Testis (tissue), 5 donors: ENCODE measurements at regions of chr3 and their contacts with region 1.

Region 1: GRCh38 chr3:171772427-171773056 is 37.7 kb downstream of the PLD1 start:
- DNase-seq: peak; percentile 82
- H3K4me3 ChIP-seq: no peak overlapping the region
- H3K27ac ChIP-seq: no peak overlapping the region
- H3K4me1 ChIP-seq: peaks cover 11% of the 10 kb centered on the region
- H3K27me3 ChIP-seq: no peaks in the 10 kb centered on the region
- CTCF ChIP-seq: peak; percentile 52 to 68 (median 64)
- POLR2A ChIP-seq: no peak

Region 2: DNA sequence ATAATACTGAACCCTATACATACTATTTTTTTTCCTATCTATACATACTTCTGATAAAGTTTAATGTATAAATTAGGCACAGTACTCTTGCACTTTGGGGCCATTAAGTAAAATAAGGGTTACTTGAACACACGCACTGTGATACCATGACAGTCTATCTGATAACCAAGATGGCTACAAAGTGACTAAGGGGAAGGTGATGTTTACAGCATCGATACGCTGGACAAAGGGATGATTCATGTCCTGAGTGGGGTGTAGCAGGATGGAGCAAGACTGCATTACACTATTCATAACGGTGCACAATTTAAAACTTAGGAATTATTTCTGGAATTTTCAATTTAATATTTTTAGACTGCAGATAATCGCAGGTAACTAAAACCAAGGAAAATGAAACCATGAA is 716.0 kb before region 1 on chr3:
- intact Hi-C with region 1: no loop called
- DNase-seq: no peak
- H3K4me3 ChIP-seq: no peak overlapping the region
- H3K27ac ChIP-seq: no peak overlapping the region
- H3K4me1 ChIP-seq: no peaks in the 10 kb centered on the region
- H3K27me3 ChIP-seq: no peaks in the 10 kb centered on the region
- CTCF ChIP-seq: no peak
- POLR2A ChIP-seq: no peak

Region 3: DNA sequence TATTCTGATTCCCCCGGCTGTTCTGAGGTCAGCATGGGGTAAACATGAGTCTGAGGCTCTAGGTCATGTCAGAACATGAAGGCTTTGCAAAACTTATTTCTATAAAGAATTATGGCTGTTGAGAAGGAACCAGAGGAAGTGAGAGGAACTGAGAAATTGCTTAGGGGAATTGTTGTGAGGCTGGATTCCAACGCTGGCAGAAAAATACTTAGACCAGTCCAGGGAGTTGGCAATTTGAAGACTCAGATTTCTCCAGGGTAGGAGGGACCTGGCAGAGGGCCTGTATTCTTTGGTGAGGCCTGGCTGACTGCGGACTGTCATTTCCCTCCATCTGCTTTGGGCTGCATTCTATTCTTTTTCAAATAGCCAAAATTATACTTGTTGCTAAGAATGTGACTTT is 117.7 kb before region 1 on chr3:
- intact Hi-C with region 1: loop called (anchors 10 kb)
- DNase-seq: peak; percentile 57
- H3K4me3 ChIP-seq: no peak overlapping the region
- H3K27ac ChIP-seq: no peak overlapping the region
- H3K4me1 ChIP-seq: peaks cover 2% of the 10 kb centered on the region
- H3K27me3 ChIP-seq: no peaks in the 10 kb centered on the region
- CTCF ChIP-seq: no peak
- POLR2A ChIP-seq: no peak